Activated CD4-positive, alpha-beta T cell treated with anti-CD3 and anti-CD28 coated beads for 36 hours (primary cell): ENCODE measurements at regions of chr6 and their contacts with region 1.

Region 1: GRCh38 chr6:157379656-157380454 is 1.1 kb upstream of the ZDHHC14 start:
- DNase-seq: peak; percentile 93
- ATAC-seq: peak; percentile 87
- H3K4me3 Mint-ChIP-seq: peak overlapping the region; percentile 73
- H3K27ac Mint-ChIP-seq: peak overlapping the region; percentile 32
- H3K4me1 Mint-ChIP-seq: peaks cover 34% of the 10 kb centered on the region
- H3K27me3 Mint-ChIP-seq: peaks cover 8% of the 10 kb centered on the region

Region 2: GRCh38 chr6:157428427-157429202 is 48.8 kb after region 1 on chr6:
- CTCF ChIA-PET with region 1: no interaction called
- POLR2A ChIA-PET with region 1: no interaction called
- intact Hi-C with region 1: loop called (anchors 1 to 2 kb)
- DNase-seq: peak; percentile 88
- ATAC-seq: peak; percentile 89
- H3K4me3 Mint-ChIP-seq: peak overlapping the region; percentile 51
- H3K27ac Mint-ChIP-seq: peak overlapping the region; percentile 91
- H3K4me1 Mint-ChIP-seq: peaks cover 46% of the 10 kb centered on the region
- H3K27me3 Mint-ChIP-seq: no peaks in the 10 kb centered on the region

Region 3: DNA sequence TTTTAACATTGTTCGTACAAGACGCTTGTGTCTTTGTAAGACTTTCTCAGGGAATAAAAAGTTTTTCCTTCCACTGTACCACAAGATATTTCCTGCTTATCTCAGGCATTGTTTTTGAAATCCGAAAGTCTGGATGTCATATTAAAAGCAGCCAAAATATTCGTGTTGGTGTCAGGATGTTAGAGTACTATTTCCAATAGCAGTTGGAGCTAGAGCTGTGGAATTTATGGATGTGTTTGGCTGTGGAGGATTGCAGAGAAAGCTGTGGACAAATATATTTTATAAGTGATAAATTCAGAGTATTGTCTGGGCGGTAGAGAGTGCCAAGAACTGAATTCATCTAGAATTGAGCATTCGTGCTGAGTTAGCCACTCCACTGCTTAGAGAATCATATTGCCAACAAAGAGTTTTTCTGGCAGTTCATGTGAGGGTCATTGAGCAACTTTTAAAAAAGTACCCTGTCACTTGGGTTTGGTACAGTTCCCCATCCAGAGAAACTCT is 58.8 kb after region 1 on chr6:
- CTCF ChIA-PET with region 1: no interaction called
- POLR2A ChIA-PET with region 1: no interaction called
- intact Hi-C with region 1: no loop called
- DNase-seq: no peak
- ATAC-seq: no peak
- H3K4me3 Mint-ChIP-seq: no peak overlapping the region
- H3K27ac Mint-ChIP-seq: no peak overlapping the region
- H3K4me1 Mint-ChIP-seq: peaks cover 18% of the 10 kb centered on the region
- H3K27me3 Mint-ChIP-seq: no peaks in the 10 kb centered on the region

Region 4: DNA sequence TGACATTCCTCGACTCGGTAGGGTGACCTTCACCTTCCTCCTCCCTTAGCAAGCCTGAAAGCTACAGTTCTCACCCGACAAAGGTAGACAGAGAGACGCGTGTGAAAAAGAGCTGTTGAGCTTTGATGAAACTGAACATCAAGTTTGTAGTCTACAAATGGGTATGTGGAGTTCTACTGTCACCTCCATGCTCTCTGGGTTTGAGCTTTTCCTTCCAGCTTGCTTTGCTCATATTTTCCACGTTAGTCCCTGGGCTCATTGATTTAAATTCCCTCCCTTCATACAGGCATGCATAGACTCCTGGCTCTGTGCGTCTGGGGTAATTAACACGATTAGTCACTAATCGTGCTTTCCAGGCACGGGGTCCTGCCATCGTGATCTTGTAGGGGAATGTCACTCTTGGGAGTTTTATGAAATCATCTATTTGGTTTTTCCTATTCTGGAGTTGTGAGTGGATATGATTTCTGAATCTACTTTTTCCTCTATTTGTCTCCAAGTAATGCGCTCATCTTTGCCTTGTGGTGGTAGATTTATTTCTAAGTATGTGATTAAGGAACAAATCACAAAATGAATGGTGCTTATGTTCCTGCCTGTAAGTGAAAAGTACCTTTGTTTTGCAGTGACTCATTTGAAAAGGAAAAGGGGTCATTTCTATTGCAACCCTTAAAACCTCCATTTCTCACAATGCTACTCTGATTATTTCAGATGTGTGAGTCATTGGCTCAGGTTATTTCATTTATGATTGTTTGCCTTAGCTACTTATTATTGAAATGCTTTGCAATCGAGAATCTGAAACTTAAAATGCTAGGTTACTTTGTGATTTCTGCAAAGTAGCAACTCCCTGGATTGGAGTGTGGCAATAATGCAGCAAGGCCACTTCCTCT is 155.7 kb after region 1 on chr6:
- CTCF ChIA-PET with region 1: no interaction called
- POLR2A ChIA-PET with region 1: no interaction called
- intact Hi-C with region 1: loop called (anchors 1 to 5 kb)
- DNase-seq: peak; percentile 49
- ATAC-seq: peak; percentile 88
- H3K4me3 Mint-ChIP-seq: peak overlapping the region; percentile 47
- H3K27ac Mint-ChIP-seq: peak overlapping the region; percentile 88
- H3K4me1 Mint-ChIP-seq: peaks cover 35% of the 10 kb centered on the region
- H3K27me3 Mint-ChIP-seq: peaks cover 9% of the 10 kb centered on the region

Region 5: GRCh38 chr6:157823001-157823527 is 443.2 kb after region 1 on chr6 and contains the start of gene SNX9:
- CTCF ChIA-PET with region 1: no interaction called
- POLR2A ChIA-PET with region 1: no interaction called
- intact Hi-C with region 1: loop called in 1 of 2 experiments (anchors 5 kb)
- DNase-seq: peak; percentile 84
- ATAC-seq: peak; percentile 59
- H3K4me3 Mint-ChIP-seq: peak within 1 kb of the TSS; percentile 92
- H3K27ac Mint-ChIP-seq: peak within 1 kb of the TSS; percentile 99
- H3K4me1 Mint-ChIP-seq: peaks cover 48% of the 10 kb centered on the region
- H3K27me3 Mint-ChIP-seq: peaks cover 11% of the 10 kb centered on the region
- total RNA-seq, gene SNX9: 39.4 to 43.3 TPM